Activated B cell treated with CpG ODN at 0.5 μM for 24 hours (primary cell): ENCODE measurements at regions of chr3 and their contacts with region 1.

Region 1: DNA sequence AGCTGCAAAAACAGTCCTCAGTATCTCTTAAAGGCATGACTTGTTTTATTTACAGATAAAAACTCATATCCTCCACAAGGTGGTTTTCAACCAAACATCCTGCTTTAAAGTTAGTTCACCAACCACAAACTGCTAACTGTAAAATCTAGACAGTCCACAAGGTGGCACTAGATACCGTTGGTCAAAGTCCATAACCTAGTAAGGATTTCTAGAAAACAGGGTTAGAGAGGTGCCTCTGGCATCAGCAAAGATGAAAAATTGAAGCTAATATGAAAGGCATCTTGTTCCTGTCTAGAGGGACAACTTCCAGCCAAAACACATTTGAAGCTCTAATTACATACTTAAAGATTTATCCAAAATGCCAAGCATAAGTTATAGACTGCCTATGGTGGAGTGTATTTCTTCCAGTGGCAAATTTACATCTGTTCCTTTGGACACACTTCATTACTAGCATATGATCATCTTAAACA is 56.0 kb downstream of the ZMAT3 start:
- DNase-seq: no peak
- ATAC-seq: peak; percentile 74
- H3K4me3 Mint-ChIP-seq: peak overlapping the region; percentile 15
- H3K27ac Mint-ChIP-seq: peak overlapping the region; percentile 57
- H3K4me1 Mint-ChIP-seq: peaks cover 59% of the 10 kb centered on the region
- H3K27me3 Mint-ChIP-seq: no peaks in the 10 kb centered on the region
- CTCF ChIP-seq: peak; percentile 88

Region 2: GRCh38 chr3:178986456-178986855 is 29.1 kb before region 1 on chr3:
- CTCF ChIA-PET with region 1: no interaction called
- POLR2A ChIA-PET with region 1: no interaction called
- intact Hi-C with region 1: no loop called
- DNase-seq: no peak
- ATAC-seq: no peak
- H3K4me3 Mint-ChIP-seq: no peak overlapping the region
- H3K27ac Mint-ChIP-seq: no peak overlapping the region
- H3K4me1 Mint-ChIP-seq: peaks cover 7% of the 10 kb centered on the region
- H3K27me3 Mint-ChIP-seq: no peaks in the 10 kb centered on the region
- CTCF ChIP-seq: no peak

Region 3: DNA sequence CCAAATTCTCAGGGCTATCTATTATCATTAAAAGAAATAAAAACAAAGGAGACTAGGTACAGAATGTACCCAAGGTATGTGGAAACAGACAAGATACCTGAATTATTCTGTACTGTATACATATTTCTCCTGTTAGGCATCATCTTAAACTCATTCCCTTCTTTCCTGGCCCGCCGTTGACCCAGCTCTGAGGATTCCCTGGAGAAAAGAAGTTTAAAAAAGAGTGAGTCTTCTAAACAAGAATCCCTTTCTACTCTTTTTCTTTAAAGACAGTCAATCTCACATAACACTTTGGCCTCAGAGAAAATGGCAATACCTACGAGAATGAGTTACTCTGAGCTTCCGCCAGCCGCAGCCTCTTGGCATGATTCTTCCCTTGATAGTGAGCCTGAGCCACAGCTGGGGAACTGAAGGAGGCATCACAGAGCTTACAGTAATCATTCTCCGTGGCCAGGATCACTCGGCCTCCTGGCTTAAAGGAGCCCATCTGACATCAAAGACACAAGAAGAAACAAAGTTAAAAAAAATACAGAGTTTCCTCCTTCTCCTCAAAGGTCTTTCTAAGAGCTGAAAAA is 11.8 kb after region 1 on chr3:
- CTCF ChIA-PET with region 1: interaction called, 5 read pairs
- POLR2A ChIA-PET with region 1: interaction called, 3 read pairs
- intact Hi-C with region 1: loop called (anchors 1 kb)
- DNase-seq: no peak
- ATAC-seq: no peak
- H3K4me3 Mint-ChIP-seq: no peak overlapping the region
- H3K27ac Mint-ChIP-seq: no peak overlapping the region
- H3K4me1 Mint-ChIP-seq: no peaks in the 10 kb centered on the region
- H3K27me3 Mint-ChIP-seq: no peaks in the 10 kb centered on the region
- CTCF ChIP-seq: no peak

Region 4: GRCh38 chr3:179071550-179072397 is 56.2 kb after region 1 on chr3 and contains the start of gene ZMAT3:
- CTCF ChIA-PET with region 1: interaction called, 18 read pairs
- POLR2A ChIA-PET with region 1: interaction called, 5 read pairs
- intact Hi-C with region 1: loop called (anchors 1 kb)
- DNase-seq: peak; percentile 82
- ATAC-seq: peak; percentile 74
- H3K4me3 Mint-ChIP-seq: peak within 1 kb of the TSS; percentile 96
- H3K27ac Mint-ChIP-seq: peak within 1 kb of the TSS; percentile 91
- H3K4me1 Mint-ChIP-seq: peaks cover 60% of the 10 kb centered on the region
- H3K27me3 Mint-ChIP-seq: no peaks in the 10 kb centered on the region
- CTCF ChIP-seq: no peak
- total RNA-seq, gene ZMAT3: 29.8 and 32.0 TPM in 2 replicates

Region 5: DNA sequence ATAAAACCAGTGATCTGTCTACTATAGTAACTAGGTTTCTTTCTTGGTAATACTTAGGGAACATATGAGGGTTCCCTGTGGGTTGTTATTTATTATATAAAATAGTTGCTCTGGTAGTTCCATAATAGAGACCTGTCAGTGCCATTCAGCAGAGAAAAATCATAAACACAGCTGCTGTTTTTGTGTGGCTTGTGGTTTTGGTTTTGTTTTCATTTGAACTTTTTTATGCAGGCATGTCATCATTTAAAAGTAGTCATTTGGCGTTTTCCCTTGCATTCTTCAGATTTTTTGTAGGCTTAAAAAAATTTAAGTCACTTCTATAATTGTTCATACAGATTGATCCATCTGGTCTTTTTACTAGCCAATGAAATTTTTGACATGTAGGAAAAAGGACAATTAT is 180.5 kb after region 1 on chr3:
- CTCF ChIA-PET with region 1: no interaction called
- POLR2A ChIA-PET with region 1: no interaction called
- intact Hi-C with region 1: loop called (anchors 5 kb)
- DNase-seq: no peak
- ATAC-seq: peak; percentile 25
- H3K4me3 Mint-ChIP-seq: no peak overlapping the region
- H3K27ac Mint-ChIP-seq: no peak overlapping the region
- H3K4me1 Mint-ChIP-seq: peaks cover 47% of the 10 kb centered on the region
- H3K27me3 Mint-ChIP-seq: no peaks in the 10 kb centered on the region
- CTCF ChIP-seq: no peak

Region 6: GRCh38 chr3:179260949-179261765 is 245.6 kb after region 1 on chr3:
- CTCF ChIA-PET with region 1: interaction called, 4 read pairs
- POLR2A ChIA-PET with region 1: no interaction called
- intact Hi-C with region 1: loop called (anchors 2 kb)
- DNase-seq: peak; percentile 75
- ATAC-seq: peak; percentile 88
- H3K4me3 Mint-ChIP-seq: peak overlapping the region; percentile 84
- H3K27ac Mint-ChIP-seq: peak overlapping the region; percentile 71
- H3K4me1 Mint-ChIP-seq: peaks cover 53% of the 10 kb centered on the region
- H3K27me3 Mint-ChIP-seq: no peaks in the 10 kb centered on the region
- CTCF ChIP-seq: no peak

Region 7: GRCh38 chr3:179347345-179348194 is 332.0 kb after region 1 on chr3 and contains the start of gene MFN1:
- CTCF ChIA-PET with region 1: no interaction called
- POLR2A ChIA-PET with region 1: no interaction called
- intact Hi-C with region 1: loop called (anchors 1 kb)
- DNase-seq: peak; percentile 80
- ATAC-seq: peak; percentile 88
- H3K4me3 Mint-ChIP-seq: peak within 1 kb of the TSS; percentile 98
- H3K27ac Mint-ChIP-seq: peak within 1 kb of the TSS; percentile 95
- H3K4me1 Mint-ChIP-seq: peaks cover 35% of the 10 kb centered on the region
- H3K27me3 Mint-ChIP-seq: no peaks in the 10 kb centered on the region
- CTCF ChIP-seq: no peak
- total RNA-seq, gene MFN1: 64.9 and 65.3 TPM in 2 replicates

Region 8: GRCh38 chr3:179446501-179446900 is 430.9 kb after region 1 on chr3:
- CTCF ChIA-PET with region 1: no interaction called
- POLR2A ChIA-PET with region 1: no interaction called
- intact Hi-C with region 1: no loop called
- DNase-seq: no peak
- ATAC-seq: no peak
- H3K4me3 Mint-ChIP-seq: no peak overlapping the region
- H3K27ac Mint-ChIP-seq: no peak overlapping the region
- H3K4me1 Mint-ChIP-seq: peaks cover 31% of the 10 kb centered on the region
- H3K27me3 Mint-ChIP-seq: no peaks in the 10 kb centered on the region
- CTCF ChIP-seq: no peak

Region 9: GRCh38 chr3:180246688-180247195 is 1231.2 kb after region 1 on chr3:
- CTCF ChIA-PET with region 1: no interaction called
- POLR2A ChIA-PET with region 1: no interaction called
- intact Hi-C with region 1: no loop called
- DNase-seq: no peak
- ATAC-seq: no peak
- H3K4me3 Mint-ChIP-seq: no peak overlapping the region
- H3K27ac Mint-ChIP-seq: no peak overlapping the region
- H3K4me1 Mint-ChIP-seq: no peaks in the 10 kb centered on the region
- H3K27me3 Mint-ChIP-seq: no peaks in the 10 kb centered on the region
- CTCF ChIP-seq: no peak